ENCODE measurements at regions of chrX and their contacts with region 1.

Region 1: DNA sequence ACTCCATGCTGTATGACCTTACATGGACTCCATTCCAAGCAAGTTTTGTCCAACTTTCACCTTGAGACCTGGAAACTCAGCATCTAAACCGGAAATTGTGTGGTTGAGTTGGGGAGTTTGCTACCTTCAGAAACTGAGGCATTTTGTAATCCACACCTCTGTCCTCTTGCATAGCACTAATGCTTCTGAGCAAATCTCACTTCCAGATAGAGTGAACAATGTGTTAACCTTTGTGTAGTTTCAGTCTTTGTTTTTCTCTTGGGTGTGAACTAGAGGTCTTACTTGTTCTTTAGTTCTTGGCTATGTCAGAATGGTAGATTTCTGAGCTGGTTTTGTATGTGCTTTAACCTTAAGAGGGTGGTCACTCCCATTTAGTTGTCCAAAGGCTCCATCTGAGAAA is 48.1 kb upstream of the TCEAL2 start:
- DNase-seq: no peak
- H3K4me3 ChIP-seq: no peak overlapping the region
- H3K27ac ChIP-seq: no peak overlapping the region
- H3K4me1 ChIP-seq: no peaks in the 10 kb centered on the region
- H3K27me3 ChIP-seq: peaks cover 8% of the 10 kb centered on the region
- CTCF ChIP-seq: no peak

Region 2: DNA sequence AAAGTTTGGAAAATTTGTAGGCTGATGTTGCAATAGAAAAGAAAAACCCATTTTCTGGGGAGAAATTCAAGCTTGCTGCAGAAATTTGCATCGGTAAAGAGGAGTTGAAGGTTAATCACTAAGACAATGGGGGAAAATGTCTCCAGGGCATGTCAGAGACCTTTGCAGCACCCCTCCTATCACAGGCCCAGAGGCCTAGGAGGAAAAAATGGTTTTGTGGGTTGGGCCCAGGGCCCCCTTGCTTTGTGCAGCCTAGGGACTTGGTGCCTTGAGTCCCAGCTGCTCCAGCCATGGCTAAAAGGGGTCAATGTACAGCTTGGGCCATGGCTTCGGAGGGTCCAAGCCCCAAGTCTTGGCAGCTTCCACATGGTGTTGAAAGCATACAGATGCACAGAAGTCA is 421.3 kb after region 1 on chrX:
- CTCF ChIA-PET with region 1: no interaction called
- POLR2A ChIA-PET with region 1: no interaction called
- intact Hi-C with region 1: loop called (anchors 10 kb)
- DNase-seq: no peak
- H3K4me3 ChIP-seq: no peak overlapping the region
- H3K27ac ChIP-seq: no peak overlapping the region
- H3K4me1 ChIP-seq: no peaks in the 10 kb centered on the region
- H3K27me3 ChIP-seq: no peaks in the 10 kb centered on the region
- CTCF ChIP-seq: no peak

Region 3: DNA sequence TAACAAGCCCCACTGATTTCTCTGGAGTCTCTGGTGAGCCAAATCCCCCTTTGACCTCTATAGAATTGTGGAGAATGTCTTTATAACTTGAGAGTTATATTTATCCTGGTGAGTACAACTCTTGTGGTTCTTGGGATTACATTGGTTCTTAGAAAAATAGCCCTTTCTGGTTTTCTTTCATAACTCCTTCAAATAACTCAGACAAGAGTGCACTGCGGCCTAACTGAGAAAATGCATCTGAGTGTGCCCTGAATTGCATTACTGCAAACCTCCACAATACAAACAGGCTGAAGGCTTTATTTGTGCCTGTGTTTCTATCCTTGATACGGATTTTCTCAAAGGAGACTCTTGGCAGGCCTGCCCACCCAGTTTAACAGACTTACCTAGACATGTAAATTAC is 1301.6 kb after region 1 on chrX:
- CTCF ChIA-PET with region 1: no interaction called
- POLR2A ChIA-PET with region 1: no interaction called
- intact Hi-C with region 1: no loop called
- DNase-seq: no peak
- H3K4me3 ChIP-seq: no peak overlapping the region
- H3K27ac ChIP-seq: no peak overlapping the region
- H3K4me1 ChIP-seq: peaks cover 4% of the 10 kb centered on the region
- H3K27me3 ChIP-seq: no peaks in the 10 kb centered on the region
- CTCF ChIP-seq: no peak

Measured in A673 (cell line).